ENCODE measurements at regions of chr22 and their contacts with region 1.

Region 1: DNA sequence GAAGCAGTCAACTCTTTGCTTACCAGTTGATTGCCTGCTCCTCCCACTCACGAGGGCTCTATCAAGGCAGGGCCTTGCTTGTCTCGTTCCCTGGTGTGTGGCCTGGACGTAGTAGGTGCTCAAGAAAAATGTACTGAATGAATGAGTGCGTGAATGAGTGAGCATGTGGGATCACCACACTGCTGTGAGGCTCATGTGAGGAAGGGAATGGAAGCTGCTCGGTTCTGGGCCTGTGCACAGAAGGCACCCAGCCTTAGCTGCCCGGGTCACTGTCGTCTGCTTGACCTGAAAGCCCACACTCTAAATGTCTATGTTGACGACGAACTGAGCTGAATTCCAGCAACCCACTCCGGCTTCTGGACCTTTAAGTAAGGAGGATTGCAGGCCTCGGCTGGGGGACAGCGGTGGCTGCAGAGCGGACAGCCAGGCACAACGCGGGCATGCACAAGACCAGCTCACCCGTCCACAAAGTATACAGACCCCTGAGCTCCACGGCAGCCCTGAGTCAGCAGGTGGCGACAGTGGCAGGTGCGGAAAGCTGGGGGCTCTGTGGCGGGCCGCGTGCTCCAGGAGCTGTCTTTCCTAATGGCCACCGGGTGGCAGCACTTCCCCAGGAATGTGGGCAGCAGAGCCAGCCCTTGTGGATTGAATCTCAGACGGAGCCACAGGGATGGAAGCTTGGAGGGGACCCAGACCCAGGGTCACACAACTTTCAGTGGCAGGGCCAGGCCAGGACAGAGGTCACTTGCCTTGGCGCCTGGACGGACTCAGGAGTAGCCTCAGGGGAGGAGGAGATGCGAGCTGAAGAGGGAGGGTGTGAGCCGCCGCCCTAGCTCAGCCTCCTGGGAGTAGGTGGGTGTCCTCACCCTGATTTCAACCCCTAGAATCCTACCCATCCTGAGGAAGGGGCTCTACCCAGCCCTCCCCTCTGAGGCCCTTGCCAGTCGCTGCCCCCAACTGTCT is 5.0 kb upstream of the PICK1 start:
- DNase-seq: peak; percentile 91
- CTCF ChIP-seq: peak; percentile 94

Region 2: DNA sequence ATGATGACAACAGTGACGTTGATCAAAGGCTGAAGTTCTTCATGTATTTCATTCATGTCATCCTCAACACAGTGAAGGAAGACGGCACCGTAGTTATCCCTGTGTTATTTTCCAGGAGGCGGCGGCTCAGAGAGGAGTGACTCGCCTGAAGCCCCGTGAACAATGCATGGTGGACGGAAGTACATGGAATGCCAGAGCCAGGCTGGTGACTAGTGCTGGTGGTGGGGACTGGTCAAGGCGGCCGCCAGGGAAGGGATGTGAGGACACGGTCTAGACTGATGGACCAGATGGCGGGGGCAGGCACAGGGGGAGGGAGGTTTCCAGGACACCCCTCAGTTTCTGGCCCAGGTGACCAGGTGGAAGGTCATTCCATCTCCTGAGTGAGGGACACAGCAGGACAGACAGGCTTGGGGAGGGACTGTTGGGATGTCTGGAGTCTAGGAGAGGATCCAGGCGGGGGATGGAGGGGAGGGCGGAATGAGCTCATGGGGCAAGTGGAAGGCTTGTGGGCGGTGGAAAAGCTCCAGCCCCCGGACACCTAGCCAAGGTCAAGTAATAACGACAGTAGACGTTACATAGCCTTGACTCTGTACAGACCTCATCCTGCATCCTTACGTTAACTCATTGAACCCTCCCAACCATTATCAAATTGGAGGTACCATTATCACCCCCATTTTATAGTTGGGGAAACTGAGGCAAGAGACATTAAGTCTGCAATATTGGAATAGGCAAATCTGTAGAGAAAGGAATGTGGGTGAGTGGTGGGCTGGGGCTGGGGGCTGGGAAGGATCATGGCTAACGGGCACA is 11.0 kb before region 1 on chr22:
- CTCF ChIA-PET with region 1: interaction called, 13 read pairs
- POLR2A ChIA-PET with region 1: no interaction called
- DNase-seq: no peak
- CTCF ChIP-seq: no peak

Region 3: GRCh38 chr22:38074181-38075104 is 22.3 kb after region 1 on chr22:
- CTCF ChIA-PET with region 1: interaction called, 12 read pairs
- POLR2A ChIA-PET with region 1: no interaction called
- DNase-seq: no peak
- CTCF ChIP-seq: no peak

Region 4: DNA sequence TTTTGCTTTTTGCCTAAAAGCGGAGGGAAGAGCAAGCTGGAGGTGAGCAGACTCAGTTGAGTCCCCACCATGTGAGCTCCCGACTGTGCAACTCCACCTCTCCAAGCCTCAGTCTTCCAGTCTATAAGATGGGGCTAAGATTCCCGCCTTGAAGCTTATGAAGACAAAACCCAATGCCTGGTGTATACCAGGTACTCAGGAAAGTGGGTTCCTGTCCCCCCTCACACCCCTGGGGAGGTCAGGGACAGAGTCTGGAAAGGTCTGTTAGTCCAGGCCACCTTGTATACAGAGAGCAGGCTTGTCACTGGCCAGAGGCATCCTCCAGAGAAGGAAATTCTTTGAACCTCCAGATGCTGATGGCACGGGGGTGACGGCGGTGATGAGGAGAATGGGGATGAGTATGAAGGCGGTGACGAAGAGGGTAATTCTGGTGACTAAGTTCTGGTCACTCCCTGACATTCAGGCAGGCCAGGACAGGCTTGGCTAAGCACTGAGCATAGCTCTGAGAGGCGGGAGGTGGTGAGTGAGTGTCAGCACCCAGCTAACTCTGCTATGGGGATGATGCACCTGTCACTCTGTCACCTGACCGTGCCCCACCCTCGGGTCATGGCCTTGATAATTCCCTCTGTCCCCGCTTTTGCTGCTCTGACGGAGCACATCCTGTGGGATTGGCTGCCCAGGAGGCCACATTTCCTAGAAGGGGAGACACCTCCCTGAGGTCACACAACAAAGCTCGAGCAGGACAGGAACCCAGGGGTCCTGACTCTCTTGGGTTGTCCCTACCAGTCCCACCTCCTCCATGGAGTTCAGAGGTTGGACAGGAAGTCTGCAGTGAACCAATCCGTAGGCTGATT is 295.9 kb after region 1 on chr22:
- CTCF ChIA-PET with region 1: interaction called, 12 read pairs
- POLR2A ChIA-PET with region 1: no interaction called
- DNase-seq: no peak
- CTCF ChIP-seq: no peak

Region 5: GRCh38 chr22:38513063-38513462 is 460.9 kb after region 1 on chr22:
- CTCF ChIA-PET with region 1: interaction called, 15 read pairs
- POLR2A ChIA-PET with region 1: no interaction called
- DNase-seq: peak; percentile 54
- CTCF ChIP-seq: peak; percentile 60

Region 6: GRCh38 chr22:38578505-38578904 is 526.3 kb after region 1 on chr22:
- CTCF ChIA-PET with region 1: interaction called, 44 read pairs
- POLR2A ChIA-PET with region 1: no interaction called
- DNase-seq: no peak
- CTCF ChIP-seq: no peak